Endothelial cell of umbilical vein (primary cell): ENCODE measurements at regions of chr2 and their contacts with region 1.

Region 1: DNA sequence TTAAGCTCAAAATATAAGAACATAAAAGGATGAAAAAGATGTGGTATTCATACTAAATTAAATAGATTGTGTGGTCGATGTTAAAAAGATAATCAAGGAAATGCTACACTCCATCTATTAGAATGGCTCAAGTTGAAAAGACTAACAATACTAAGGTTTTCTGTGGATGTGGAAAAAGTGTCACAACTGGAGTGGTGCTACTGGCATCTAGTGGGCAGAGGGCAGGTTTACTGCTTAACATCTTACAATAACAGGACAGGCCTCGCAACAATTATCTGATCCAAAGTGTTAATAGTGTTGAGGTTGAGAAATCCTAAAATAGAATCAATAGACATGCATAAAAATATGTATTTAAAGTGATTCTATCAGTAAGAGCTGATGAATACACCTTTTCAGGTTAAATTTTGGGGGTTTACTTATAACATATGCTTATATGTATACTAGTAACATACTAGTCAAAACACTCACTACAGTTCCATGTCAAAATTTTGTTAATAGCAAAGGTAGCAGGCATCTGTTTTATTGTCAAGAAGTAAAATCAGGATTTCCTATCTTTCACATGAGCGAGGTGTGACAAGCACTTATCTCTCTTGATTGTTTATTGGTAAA is 91.5 kb upstream of the TMEFF2 start:
- DNase-seq: peak; percentile 73
- H3K4me3 ChIP-seq: no peak overlapping the region
- H3K27ac ChIP-seq: no peak overlapping the region
- H3K4me1 ChIP-seq: no peaks in the 10 kb centered on the region
- H3K27me3 ChIP-seq: peaks cover 1 to 4% of the 10 kb centered on the region in 2 experiments
- CTCF ChIP-seq: peak; percentile 45 to 55
- POLR2A ChIP-seq: no peak

Region 2: GRCh38 chr2:191758518-191759507 is 527.4 kb before region 1 on chr2:
- CTCF ChIA-PET with region 1: interaction called, 5 read pairs
- POLR2A ChIA-PET with region 1: no interaction called
- dilution Hi-C with region 1: no loop called
- intact Hi-C with region 1: loop called (anchors 5 kb)
- DNase-seq: peak; percentile 66
- H3K4me3 ChIP-seq: no peak overlapping the region
- H3K27ac ChIP-seq: no peak overlapping the region
- H3K4me1 ChIP-seq: no peaks in the 10 kb centered on the region
- H3K27me3 ChIP-seq: peaks cover 10 to 14% of the 10 kb centered on the region in 2 experiments
- CTCF ChIP-seq: peak; percentile 79 to 81
- POLR2A ChIP-seq: no peak

Region 3: DNA sequence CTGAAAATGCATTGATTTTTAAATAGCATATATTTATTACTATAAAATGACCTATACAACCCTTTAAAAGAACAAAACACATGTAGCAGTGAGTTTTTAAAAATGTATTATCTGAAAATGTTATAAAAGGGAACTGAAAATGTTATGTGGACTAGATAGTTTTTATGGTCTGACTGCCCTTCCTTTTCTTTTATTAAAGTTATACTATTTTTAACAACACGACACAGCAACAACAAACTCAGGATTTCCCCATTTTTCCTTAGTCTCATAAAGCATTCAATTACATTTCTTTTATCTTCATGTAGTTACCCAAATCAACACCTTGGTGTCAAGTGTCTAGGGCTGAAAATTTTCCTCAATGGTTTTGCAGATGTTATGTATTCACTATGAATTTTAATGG is 41.4 kb after region 1 on chr2:
- CTCF ChIA-PET with region 1: no interaction called
- POLR2A ChIA-PET with region 1: no interaction called
- dilution Hi-C with region 1: no loop called
- intact Hi-C with region 1: no loop called
- DNase-seq: no peak
- H3K4me3 ChIP-seq: no peak overlapping the region
- H3K27ac ChIP-seq: no peak overlapping the region
- H3K4me1 ChIP-seq: no peaks in the 10 kb centered on the region
- H3K27me3 ChIP-seq: no peaks in the 10 kb centered on the region
- CTCF ChIP-seq: no peak
- POLR2A ChIP-seq: no peak

Region 4: GRCh38 chr2:192696857-192697256 is 410.7 kb after region 1 on chr2:
- CTCF ChIA-PET with region 1: no interaction called
- POLR2A ChIA-PET with region 1: no interaction called
- dilution Hi-C with region 1: no loop called
- intact Hi-C with region 1: no loop called
- DNase-seq: no peak
- H3K4me3 ChIP-seq: no peak overlapping the region
- H3K27ac ChIP-seq: no peak overlapping the region
- H3K4me1 ChIP-seq: no peaks in the 10 kb centered on the region
- H3K27me3 ChIP-seq: no peaks in the 10 kb centered on the region
- CTCF ChIP-seq: no peak
- POLR2A ChIP-seq: no peak